PC-9 (cell line): ENCODE measurements at regions of chr20 and their contacts with region 1.

Region 1: GRCh38 chr20:49435659-49436058 is 46.8 kb downstream of the KCNB1 start:
- DNase-seq: peak in 1 of 2 experiments; percentile 14
- H3K4me3 ChIP-seq: no peak overlapping the region
- H3K27ac ChIP-seq: no peak overlapping the region
- H3K4me1 ChIP-seq: no peaks in the 10 kb centered on the region
- H3K27me3 ChIP-seq: peaks cover 50% of the 10 kb centered on the region
- CTCF ChIP-seq: peak; percentile 52

Region 2: GRCh38 chr20:49310705-49311104 is 125.0 kb before region 1 on chr20:
- CTCF ChIA-PET with region 1: no interaction called
- POLR2A ChIA-PET with region 1: no interaction called
- intact Hi-C with region 1: no loop called
- DNase-seq: peak in 1 of 2 experiments; percentile 62
- H3K4me3 ChIP-seq: no peak overlapping the region
- H3K27ac ChIP-seq: no peak overlapping the region
- H3K4me1 ChIP-seq: peaks cover 6% of the 10 kb centered on the region
- H3K27me3 ChIP-seq: 0 out of 2 replicates have a peak, but pooled peaks cover 2% of the 10 kb centered on the region
- CTCF ChIP-seq: no peak

Region 3: DNA sequence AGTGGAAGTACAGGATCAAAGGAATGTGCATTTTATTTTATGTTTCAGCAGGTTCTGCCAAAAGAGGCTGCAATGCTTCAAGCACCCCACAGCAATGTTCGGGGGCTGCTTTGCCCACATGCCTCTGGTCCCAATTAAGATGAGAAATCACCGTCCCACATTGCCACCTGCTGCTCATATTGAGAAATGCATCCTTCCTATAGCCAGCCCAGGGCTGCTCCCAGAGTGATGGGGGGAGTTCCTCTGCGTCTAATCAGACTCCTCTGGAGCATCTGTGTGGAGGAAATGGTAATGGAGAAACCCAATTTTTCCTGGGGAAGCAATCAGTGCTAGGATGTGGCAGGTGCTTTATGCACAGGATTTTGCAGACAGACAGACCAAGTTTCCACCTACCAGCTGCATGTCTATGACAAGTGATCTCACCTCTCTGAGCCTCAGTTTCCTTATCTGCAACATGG is 98.6 kb after region 1 on chr20:
- CTCF ChIA-PET with region 1: no interaction called
- POLR2A ChIA-PET with region 1: no interaction called
- intact Hi-C with region 1: loop called (anchors 1 kb)
- DNase-seq: peak; percentile 59 to 63
- H3K4me3 ChIP-seq: no peak overlapping the region
- H3K27ac ChIP-seq: no peak overlapping the region
- H3K4me1 ChIP-seq: peaks cover 17% of the 10 kb centered on the region
- H3K27me3 ChIP-seq: no peaks in the 10 kb centered on the region
- CTCF ChIP-seq: peak; percentile 97